ENCODE measurements at regions of chr15 and their contacts with region 1.

Region 1: GRCh38 chr15:31326156-31326732 is 391 bp upstream of the KLF13 start:
- DNase-seq: peak; percentile 95 to 99 (median 99)

Region 2: DNA sequence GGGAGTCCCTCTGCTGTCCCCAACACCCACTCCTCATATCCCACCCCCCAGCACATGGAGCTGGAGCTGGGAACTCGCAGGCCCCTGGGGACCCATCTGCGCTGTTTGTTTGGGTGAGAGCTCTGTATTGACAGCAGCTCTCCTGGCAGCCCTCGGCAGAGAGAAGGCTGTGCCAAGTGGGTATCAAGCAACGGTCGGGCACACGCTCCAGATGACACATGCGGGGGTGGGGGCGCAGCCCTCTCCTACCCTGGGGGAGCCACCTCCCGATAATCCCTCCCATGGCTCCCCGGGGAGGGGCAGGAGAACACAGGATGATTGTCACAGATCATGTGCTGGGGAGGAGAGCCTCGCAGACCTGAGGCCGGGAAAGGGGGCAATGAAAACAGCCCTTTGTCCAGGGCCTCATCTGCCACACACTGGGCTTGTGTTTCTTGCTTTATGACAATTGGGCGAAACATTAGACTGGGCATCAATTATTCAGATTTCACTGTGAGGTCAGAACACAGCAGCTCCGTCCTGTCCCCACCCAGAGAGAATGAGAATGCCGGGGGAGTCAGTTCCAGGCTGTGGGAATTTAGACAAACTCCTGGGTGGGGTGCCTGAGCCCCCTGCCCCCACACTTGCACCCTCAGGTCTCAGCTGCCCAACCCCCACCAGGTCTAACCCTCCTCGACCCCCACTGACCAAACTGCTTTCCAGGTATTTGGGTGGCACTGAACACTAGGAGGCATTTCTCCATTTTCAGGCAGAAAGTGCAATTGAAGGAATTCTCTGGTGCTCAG is 46.0 kb before region 1 on chr15:
- intact Hi-C with region 1: loop called (anchors 1 kb)
- DNase-seq: peak; percentile 82 to 97 (median 92)

Region 3: GRCh38 chr15:31365655-31366127 is 39.4 kb after region 1 on chr15:
- intact Hi-C with region 1: loop called (anchors 5 kb)
- DNase-seq: peak; percentile 84 to 97 (median 94)

Region 4: GRCh38 chr15:31396881-31397560 is 70.8 kb after region 1 on chr15:
- intact Hi-C with region 1: no loop called
- DNase-seq: peak; percentile 23 to 80 (median 58)

Region 5: DNA sequence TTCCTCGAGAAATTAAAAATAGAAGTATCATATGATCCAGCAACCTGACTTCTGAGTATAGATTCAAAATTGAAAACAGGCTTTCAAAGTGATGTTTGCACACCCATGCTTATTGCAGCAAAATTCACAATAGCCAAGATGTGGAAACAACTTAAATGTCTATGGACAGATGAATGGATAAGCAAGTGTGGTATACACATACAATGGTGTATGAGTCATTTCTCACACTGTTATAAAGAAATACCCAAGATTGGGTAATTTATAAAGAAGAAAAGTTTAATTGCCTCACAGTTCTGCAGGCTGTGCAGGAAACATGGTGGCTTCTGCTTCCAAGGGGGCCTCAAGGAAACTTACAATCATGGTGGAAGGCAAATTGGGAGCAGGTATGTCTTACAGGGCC is 101.2 kb after region 1 on chr15:
- intact Hi-C with region 1: no loop called
- DNase-seq: no peak

Region 6: DNA sequence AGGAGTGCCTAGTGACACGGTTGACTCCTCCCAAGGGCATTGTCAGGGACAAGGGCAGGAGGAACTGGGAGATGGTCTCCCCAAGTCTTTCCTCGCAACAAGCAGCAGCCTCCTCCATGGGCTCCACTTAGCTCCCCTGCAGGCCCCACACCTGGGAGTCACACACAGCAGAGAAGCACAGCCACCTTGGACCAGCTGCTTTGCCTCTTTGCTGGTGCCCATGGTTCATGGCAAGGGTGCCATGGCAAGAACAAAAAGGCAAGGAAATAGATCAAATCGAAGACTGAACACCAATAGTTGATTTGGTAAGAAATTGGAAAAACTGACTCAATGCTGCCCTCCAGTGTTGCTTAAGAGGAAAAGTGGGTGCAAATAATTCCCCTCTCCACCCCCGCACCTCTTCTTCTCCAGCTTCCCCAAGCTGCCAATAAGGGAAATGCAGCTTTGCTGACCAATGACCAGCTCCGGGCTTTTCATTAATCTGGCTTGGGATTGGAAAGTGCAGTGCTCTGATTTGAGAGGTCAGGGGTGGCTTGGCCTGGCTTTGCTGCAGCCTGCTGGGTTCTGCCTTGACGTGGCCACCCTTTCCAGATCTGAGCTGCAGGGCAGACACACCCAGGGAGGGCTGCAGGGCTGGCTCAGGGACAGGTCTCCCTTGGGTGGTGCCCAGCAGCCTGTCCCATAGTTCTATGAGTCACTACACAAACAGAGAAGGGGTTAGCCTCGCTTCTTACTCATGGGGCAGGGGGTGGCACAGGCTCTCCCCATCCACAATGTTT is 162.4 kb after region 1 on chr15:
- intact Hi-C with region 1: loop called (anchors 5 kb)
- DNase-seq: peak in 30 of 42 donors; percentile 9 to 82 (median 60)